Mammary epithelial cell (primary cell): ENCODE measurements at regions of chr9 and their contacts with region 1.

Region 1: GRCh38 chr9:14198841-14199455 is 115.0 kb downstream of the NFIB start:
- DNase-seq: peak; percentile 76
- H3K4me3 ChIP-seq: no peak overlapping the region
- H3K27ac ChIP-seq: peak overlapping the region; percentile 63
- H3K4me1 ChIP-seq: peaks cover 44% of the 10 kb centered on the region
- H3K27me3 ChIP-seq: no peaks in the 10 kb centered on the region
- CTCF ChIP-seq: no peak

Region 2: GRCh38 chr9:13213337-13213736 is 985.6 kb before region 1 on chr9:
- CTCF ChIA-PET with region 1: no interaction called
- dilution Hi-C with region 1: no loop called
- in situ Hi-C with region 1: no loop called
- intact Hi-C with region 1: loop called (anchors 10 kb)
- DNase-seq: no peak
- H3K4me3 ChIP-seq: no peak overlapping the region
- H3K27ac ChIP-seq: no peak overlapping the region
- H3K4me1 ChIP-seq: no peaks in the 10 kb centered on the region
- H3K27me3 ChIP-seq: no peaks in the 10 kb centered on the region
- CTCF ChIP-seq: peak; percentile 28 to 39

Region 3: DNA sequence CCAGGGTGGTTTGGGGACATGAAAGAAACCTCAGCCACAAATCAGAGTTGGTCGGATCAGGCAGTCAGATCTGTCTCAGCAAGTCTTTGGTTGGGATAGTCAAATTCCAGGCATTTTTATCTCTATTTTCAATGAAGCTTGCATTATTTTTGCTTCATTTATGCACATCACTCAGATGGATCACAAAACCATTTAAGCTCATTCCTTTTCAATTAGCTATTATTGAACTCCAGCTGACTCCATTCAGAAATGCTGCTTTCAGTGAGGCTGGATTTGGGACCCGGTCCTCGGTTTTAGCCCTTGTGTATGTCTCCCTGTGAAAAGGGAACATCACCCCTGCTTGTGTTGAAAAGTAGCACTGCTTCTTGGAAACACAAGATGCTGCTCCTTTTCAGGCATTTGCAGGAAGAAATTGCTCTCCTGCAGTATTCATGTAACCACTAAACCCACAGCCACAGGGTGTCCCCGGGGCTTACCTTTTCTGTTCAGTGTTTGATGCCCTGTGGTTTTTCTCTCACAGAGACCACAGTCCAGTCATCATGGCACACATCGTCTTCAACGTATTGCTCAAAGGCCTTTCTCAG is 117.9 kb before region 1 on chr9:
- CTCF ChIA-PET with region 1: no interaction called
- dilution Hi-C with region 1: no loop called
- in situ Hi-C with region 1: no loop called
- intact Hi-C with region 1: loop called (anchors 5 kb)
- DNase-seq: peak; percentile 95
- H3K4me3 ChIP-seq: no peak overlapping the region
- H3K27ac ChIP-seq: peak overlapping the region; percentile 33
- H3K4me1 ChIP-seq: peaks cover 25% of the 10 kb centered on the region
- H3K27me3 ChIP-seq: no peaks in the 10 kb centered on the region
- CTCF ChIP-seq: peak in 1 of 2 donors; percentile 16

Region 4: GRCh38 chr9:14180093-14180959 is 18.6 kb before region 1 on chr9:
- CTCF ChIA-PET with region 1: no interaction called
- dilution Hi-C with region 1: no loop called
- in situ Hi-C with region 1: no loop called
- intact Hi-C with region 1: loop called (anchors 2 kb)
- DNase-seq: peak; percentile 46
- H3K4me3 ChIP-seq: peak overlapping the region; percentile 23 to 57 (median 25)
- H3K27ac ChIP-seq: peak overlapping the region; percentile 97
- H3K4me1 ChIP-seq: peaks cover 47% of the 10 kb centered on the region
- H3K27me3 ChIP-seq: no peaks in the 10 kb centered on the region
- CTCF ChIP-seq: no peak

Region 5: GRCh38 chr9:14309403-14309802 is 110.5 kb after region 1 on chr9:
- CTCF ChIA-PET with region 1: no interaction called
- dilution Hi-C with region 1: loop called (anchors 25 kb)
- in situ Hi-C with region 1: loop called in 1 of 2 experiments (anchors 10 kb)
- intact Hi-C with region 1: loop called (anchors 2 kb)
- DNase-seq: peak; percentile 93
- H3K4me3 ChIP-seq: peak overlapping the region; percentile 39 to 98 (median 95)
- H3K27ac ChIP-seq: peak overlapping the region; percentile 95
- H3K4me1 ChIP-seq: peaks cover 34% of the 10 kb centered on the region
- H3K27me3 ChIP-seq: no peaks in the 10 kb centered on the region
- CTCF ChIP-seq: no peak